ENCODE measurements at regions of chr17 and their contacts with region 1.

Region 1: GRCh38 chr17:46061435-46061834 is 62.4 kb downstream of the STH start:
- DNase-seq: no peak
- H3K4me3 ChIP-seq: no peak overlapping the region
- H3K27ac ChIP-seq: no peak overlapping the region
- H3K4me1 ChIP-seq: peaks cover 2 to 24% of the 10 kb centered on the region in 2 experiments; a peak in 3 of 4 replicates
- H3K27me3 ChIP-seq: no peaks in the 10 kb centered on the region
- CTCF ChIP-seq: peak; percentile 62
- EP300 ChIP-seq: no peak
- RAD21 ChIP-seq: peak; percentile 49

Region 2: DNA sequence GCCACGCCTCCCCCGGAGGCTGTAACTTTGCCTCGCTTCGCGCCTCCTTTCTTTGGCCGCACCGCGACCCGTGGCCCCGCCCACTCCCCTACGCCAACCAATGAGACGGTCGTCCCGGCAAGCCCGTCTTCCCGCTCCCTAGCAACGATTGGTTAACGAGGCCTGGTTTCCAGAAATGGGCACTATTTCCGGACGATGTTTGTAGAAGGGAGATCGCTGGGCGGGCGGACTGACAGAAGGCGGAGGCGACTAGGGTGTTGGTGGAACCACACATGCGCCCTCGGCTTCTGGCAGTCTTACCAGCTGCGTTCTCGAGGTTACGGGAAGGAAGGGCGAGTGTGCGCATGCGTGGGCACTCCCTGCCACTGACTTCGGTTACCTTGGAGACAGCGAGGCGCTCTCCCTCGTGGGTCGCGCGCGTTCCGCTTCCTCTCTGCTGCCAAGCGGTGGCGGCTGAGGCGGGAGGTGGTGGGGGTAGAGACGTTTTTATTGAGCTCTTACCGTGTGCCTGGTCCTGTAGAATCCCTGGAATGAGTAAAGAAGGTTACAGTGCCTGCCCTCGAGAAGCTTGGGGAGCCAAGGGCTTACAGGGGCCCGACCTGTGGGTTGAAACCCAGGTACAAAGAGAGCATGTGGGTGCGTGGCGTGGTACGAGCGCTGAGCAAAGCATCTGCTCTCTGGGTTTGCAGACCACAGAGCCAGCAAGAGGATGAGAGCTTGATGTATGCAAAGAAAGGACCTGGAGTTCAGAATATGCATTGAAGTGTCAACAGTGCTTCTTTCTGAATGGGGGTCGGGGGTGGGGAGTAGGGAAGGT is 744.1 kb before region 1 on chr17:
- CTCF ChIA-PET with region 1: no interaction called
- POLR2A ChIA-PET with region 1: no interaction called
- DNase-seq: peak; percentile 99
- H3K4me3 ChIP-seq: peak overlapping the region; percentile 87 to 93
- H3K27ac ChIP-seq: peak overlapping the region; percentile 95 to 99
- H3K4me1 ChIP-seq: peaks cover 47 to 58% of the 10 kb centered on the region in 2 experiments
- H3K27me3 ChIP-seq: no peaks in the 10 kb centered on the region
- CTCF ChIP-seq: no peak
- EP300 ChIP-seq: no peak
- RAD21 ChIP-seq: 0 out of 2 replicates have a peak, but pooled peaks have one; percentile 15

Region 3: DNA sequence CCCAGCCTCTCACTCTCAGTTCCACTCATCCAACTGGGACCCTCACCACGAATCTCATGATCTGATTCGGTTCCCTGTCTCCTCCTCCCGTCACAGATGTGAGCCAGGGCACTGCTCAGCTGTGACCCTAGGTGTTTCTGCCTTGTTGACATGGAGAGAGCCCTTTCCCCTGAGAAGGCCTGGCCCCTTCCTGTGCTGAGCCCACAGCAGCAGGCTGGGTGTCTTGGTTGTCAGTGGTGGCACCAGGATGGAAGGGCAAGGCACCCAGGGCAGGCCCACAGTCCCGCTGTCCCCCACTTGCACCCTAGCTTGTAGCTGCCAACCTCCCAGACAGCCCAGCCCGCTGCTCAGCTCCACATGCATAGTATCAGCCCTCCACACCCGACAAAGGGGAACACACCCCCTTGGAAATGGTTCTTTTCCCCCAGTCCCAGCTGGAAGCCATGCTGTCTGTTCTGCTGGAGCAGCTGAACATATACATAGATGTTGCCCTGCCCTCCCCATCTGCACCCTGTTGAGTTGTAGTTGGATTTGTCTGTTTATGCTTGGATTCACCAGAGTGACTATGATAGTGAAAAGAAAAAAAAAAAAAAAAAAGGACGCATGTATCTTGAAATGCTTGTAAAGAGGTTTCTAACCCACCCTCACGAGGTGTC is 35.8 kb before region 1 on chr17:
- CTCF ChIA-PET with region 1: no interaction called
- POLR2A ChIA-PET with region 1: no interaction called
- DNase-seq: no peak
- H3K4me3 ChIP-seq: no peak overlapping the region
- H3K27ac ChIP-seq: no peak overlapping the region; a peak in 1 of 4 replicates
- H3K4me1 ChIP-seq: peaks cover 0 to 14% of the 10 kb centered on the region in 2 experiments; a peak in 1 of 4 replicates
- H3K27me3 ChIP-seq: no peaks in the 10 kb centered on the region
- CTCF ChIP-seq: no peak
- EP300 ChIP-seq: no peak
- RAD21 ChIP-seq: no peak

Region 4: DNA sequence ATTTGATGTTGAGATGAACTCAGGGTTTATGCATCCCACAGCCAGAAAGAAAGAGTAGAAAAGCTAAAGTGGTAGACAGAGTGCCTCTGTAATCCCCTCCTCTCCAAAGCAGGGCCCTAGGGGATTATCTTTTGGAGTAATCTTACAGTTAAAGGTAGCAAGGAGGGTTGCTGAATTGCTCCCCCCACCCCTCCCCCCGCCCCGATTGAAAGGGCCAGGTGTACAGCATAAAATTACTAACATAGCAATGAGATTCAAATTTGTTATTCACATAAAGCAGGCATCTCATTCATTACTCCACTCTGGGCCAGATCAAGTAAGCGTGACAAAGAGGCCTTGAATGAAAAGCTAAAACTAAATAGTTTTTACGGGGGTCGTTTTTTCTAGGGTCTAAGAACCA is 10.4 kb after region 1 on chr17:
- CTCF ChIA-PET with region 1: interaction called, 14 read pairs
- POLR2A ChIA-PET with region 1: interaction called, 3 read pairs
- DNase-seq: no peak
- H3K4me3 ChIP-seq: no peak overlapping the region
- H3K27ac ChIP-seq: no peak overlapping the region
- H3K4me1 ChIP-seq: peaks cover 0 to 18% of the 10 kb centered on the region in 2 experiments; a peak in 3 of 4 replicates
- H3K27me3 ChIP-seq: no peaks in the 10 kb centered on the region
- CTCF ChIP-seq: no peak
- EP300 ChIP-seq: no peak
- RAD21 ChIP-seq: no peak